Thyroid gland (tissue), 4 donors: ENCODE measurements at regions of chr22 and their contacts with region 1.

Region 1: DNA sequence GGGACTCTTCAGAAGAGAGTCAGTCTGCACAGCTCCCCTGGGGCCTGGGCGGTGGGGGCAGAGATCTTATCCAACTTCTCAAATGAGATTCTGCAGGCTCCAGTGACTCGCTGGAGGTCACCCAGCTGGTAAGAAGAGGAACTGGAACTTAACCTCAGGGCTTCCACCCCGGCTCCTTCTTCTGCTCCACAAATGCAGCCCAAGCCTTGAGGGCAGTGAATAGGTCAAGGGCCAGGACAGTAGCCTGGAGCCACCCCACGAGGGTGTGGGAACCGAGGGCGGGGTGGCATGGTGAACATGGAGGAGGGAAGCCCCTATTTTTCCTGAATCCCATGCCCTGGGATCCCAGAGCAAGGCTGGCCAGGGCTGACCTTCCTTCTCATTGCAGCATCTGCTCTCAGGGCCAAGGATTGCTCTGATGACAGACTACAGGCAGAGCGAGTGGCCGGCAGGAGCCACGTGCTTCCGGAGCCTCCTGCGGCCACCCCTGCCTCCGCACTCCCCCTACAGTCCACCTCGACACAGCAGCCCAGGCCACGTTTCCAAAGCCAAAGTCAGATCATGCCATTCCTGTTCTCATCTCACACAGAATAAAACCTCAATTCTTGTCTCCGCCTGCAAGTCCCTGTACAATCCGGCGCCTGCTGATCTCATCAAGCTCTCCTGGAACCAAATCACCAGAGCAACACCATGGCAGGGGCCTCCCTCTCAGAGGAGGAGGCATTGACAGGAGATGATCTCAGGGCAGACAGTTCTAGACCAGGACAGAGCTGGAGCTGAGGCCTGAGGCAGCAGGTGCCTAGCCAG is 21.1 kb upstream of the UPK3A start:
- DNase-seq: peak; percentile 79 to 87
- H3K4me3 ChIP-seq: no peak overlapping the region
- H3K27ac ChIP-seq: peak overlapping the region; percentile 32 to 50 (median 38)
- H3K4me1 ChIP-seq: peaks cover 9 to 24% of the 10 kb centered on the region in 2 donors
- H3K27me3 ChIP-seq: no peaks in the 10 kb centered on the region
- CTCF ChIP-seq: peak in 4 of 6 experiments; percentile 71 to 81 (median 71)
- POLR2A ChIP-seq: no peak

Region 2: DNA sequence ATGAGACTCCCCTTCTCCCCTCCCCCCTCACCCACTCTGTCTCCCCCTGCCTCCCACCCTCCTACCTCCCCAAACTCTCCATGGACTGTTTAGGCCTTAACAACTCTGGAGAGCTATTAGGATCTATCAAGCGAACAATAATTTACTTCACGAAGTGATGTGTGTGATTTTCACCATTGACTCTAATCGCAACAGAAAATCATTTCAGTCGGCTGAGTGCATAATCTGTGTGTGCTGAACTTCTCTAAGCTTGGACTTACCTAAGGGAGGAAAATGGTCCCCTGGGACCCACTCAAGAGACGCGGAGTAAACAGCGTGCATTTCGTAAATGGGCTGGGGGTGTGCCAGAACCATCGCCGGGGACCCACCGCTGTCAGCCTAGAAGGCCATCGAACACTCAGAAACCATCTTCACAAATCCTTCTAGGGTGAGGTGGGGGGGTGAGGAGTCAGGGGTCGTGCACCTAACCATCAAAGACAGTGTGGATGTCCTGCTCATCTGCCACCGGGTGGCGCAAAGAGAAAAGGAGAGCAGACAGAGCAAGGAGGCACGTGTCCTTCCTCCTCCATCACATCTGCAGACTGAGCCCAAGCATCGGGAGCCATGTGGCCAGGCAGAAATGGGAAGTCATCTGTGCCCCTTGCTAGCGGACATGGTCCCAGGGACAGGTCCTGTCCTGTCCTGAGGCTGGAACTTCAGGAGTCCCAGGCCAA is 162.0 kb before region 1 on chr22:
- intact Hi-C with region 1: loop called (anchors 5 kb)
- DNase-seq: peak; percentile 35 to 44
- H3K4me3 ChIP-seq: no peak overlapping the region
- H3K27ac ChIP-seq: no peak overlapping the region
- H3K4me1 ChIP-seq: no peaks in the 10 kb centered on the region
- H3K27me3 ChIP-seq: no peaks in the 10 kb centered on the region
- CTCF ChIP-seq: peak in 3 of 6 experiments; percentile 20 to 21 (median 20)
- POLR2A ChIP-seq: no peak